ENCODE measurements at regions of chr5 and their contacts with region 1.

Region 1: DNA sequence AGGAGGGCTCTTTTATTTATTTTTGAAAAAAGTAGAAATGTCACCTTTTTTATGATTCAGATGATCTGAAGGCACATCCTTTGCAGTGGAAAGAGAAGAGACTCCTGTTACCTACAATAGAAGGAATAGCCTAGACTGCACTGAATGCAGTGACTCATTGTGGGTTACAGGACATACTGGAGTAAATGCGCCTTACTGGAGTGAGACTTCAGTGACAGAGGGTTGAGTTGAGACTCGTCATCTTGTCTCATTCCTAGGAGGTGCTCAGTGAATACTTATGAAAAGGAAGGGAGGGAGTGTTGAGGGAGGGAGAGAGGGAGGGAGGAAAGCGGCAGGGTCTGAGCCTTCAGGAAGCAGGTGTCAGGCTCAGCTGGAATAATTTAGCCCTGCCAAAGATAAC is 25.2 kb downstream of the ANKRA2 start:
- DNase-seq: no peak
- H3K4me3 ChIP-seq: no peak overlapping the region
- H3K4me3 Mint-ChIP-seq: no peak overlapping the region
- H3K27ac ChIP-seq: no peak overlapping the region
- H3K27ac Mint-ChIP-seq: no peak overlapping the region
- H3K4me1 ChIP-seq: no peaks in the 10 kb centered on the region
- H3K4me1 Mint-ChIP-seq: peaks cover 0 to 2% (median 0%) of the 10 kb centered on the region in 4 donors
- H3K27me3 ChIP-seq: no peaks in the 10 kb centered on the region
- H3K27me3 Mint-ChIP-seq: peaks cover 14 to 27% of the 10 kb centered on the region in 2 donors

Region 2: GRCh38 chr5:73088026-73088425 is 452.2 kb before region 1 on chr5:
- CTCF ChIA-PET with region 1: interaction called, 5 read pairs
- POLR2A ChIA-PET with region 1: no interaction called
- intact Hi-C with region 1: loop called (anchors 2 kb)
- DNase-seq: no peak
- H3K4me3 ChIP-seq: no peak overlapping the region
- H3K4me3 Mint-ChIP-seq: no peak overlapping the region
- H3K27ac ChIP-seq: no peak overlapping the region
- H3K27ac Mint-ChIP-seq: no peak overlapping the region
- H3K4me1 ChIP-seq: no peaks in the 10 kb centered on the region
- H3K4me1 Mint-ChIP-seq: no peaks in the 10 kb centered on the region
- H3K27me3 ChIP-seq: no peaks in the 10 kb centered on the region
- H3K27me3 Mint-ChIP-seq: peaks cover 0 to 1% of the 10 kb centered on the region in 2 donors

Region 3: DNA sequence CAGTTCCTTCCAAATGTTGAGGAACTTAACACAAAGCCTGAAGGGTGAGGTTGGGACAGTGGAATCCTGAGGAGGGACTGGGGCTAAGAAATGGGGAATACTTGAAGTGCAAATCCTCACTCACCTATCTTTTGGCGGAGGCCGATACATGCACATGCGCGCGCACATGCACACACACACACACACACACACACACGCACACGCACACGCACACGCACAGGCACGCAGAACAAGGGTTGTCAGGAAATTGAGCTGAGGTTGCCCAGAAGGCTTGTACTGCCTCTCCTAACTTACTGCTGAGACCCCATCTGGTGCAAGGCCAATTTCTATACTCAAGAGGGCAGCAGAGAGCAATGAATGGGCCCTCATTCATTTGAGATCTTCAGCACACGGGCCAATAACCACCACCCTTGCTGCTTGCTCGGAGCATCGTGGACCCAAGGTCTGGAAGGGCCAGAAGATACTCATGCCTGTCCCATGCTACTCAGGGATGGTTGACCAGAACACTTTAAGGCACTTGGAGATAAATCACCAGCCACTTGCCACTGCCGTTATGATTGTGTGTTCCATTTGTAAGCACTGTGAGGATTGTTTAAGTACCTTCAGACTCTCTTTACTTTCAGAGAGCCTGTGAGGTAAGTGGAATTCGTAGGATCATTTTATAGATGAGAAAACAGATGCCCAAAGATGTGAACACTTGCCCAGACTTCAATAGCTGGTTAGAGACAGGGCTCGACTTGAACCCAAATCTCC is 20.5 kb before region 1 on chr5:
- CTCF ChIA-PET with region 1: interaction called, 143 read pairs
- POLR2A ChIA-PET with region 1: no interaction called
- intact Hi-C with region 1: loop called (anchors 1 kb)
- DNase-seq: peak; percentile 75 to 80 (median 77)
- H3K4me3 ChIP-seq: no peak overlapping the region
- H3K4me3 Mint-ChIP-seq: peak overlapping the region in 7 of 8 donors; percentile 29 to 78 (median 52)
- H3K27ac ChIP-seq: no peak overlapping the region
- H3K27ac Mint-ChIP-seq: peak overlapping the region in 5 of 7 donors; percentile 24 to 91 (median 47)
- H3K4me1 ChIP-seq: peaks cover 8% of the 10 kb centered on the region
- H3K4me1 Mint-ChIP-seq: peaks cover 2 to 9% (median 7%) of the 10 kb centered on the region in 4 donors
- H3K27me3 ChIP-seq: no peaks in the 10 kb centered on the region
- H3K27me3 Mint-ChIP-seq: no peaks in the 10 kb centered on the region

Region 4: DNA sequence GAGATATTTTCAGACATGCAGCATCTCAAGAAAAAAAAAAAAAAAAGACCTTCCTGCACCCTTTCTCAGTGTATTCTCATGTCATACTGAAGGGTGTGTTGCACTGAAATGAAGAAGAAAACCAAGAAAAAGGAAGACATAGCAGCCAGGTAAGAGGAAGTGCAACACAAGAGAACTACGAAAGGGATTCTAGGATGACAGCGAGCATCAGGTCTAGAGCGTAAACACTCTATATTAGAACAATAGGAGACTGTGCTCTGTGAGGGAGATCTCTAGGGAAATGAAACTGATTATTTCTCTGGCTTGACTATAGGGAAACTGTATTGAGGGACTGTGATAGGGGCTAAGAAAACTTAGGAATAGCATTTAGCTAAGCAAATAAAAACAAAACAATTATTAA is 11.9 kb before region 1 on chr5:
- CTCF ChIA-PET with region 1: interaction called, 143 read pairs
- POLR2A ChIA-PET with region 1: no interaction called
- intact Hi-C with region 1: no loop called
- DNase-seq: no peak
- H3K4me3 ChIP-seq: no peak overlapping the region
- H3K4me3 Mint-ChIP-seq: no peak overlapping the region
- H3K27ac ChIP-seq: no peak overlapping the region
- H3K27ac Mint-ChIP-seq: no peak overlapping the region
- H3K4me1 ChIP-seq: no peaks in the 10 kb centered on the region
- H3K4me1 Mint-ChIP-seq: no peaks in the 10 kb centered on the region
- H3K27me3 ChIP-seq: no peaks in the 10 kb centered on the region
- H3K27me3 Mint-ChIP-seq: peaks cover 9 to 11% of the 10 kb centered on the region in 2 donors

Region 5: DNA sequence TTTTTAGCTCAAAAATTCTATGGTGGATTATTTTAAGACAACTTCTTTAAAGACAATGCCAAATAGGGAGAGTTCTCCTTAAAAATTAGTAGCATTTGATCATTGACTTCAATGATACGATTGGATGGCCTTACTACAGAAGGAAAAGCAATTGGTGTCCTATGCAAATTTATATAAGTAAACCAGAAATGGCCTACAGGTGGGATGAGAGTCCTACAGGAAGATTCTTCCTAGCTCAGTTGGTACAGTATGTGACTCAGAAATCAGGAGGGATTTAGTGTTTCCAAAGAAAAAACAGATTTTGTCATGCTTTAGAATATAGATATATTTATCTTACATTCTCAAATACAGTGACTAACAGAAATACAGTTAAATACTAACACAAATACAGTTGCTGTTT is 18.8 kb after region 1 on chr5:
- CTCF ChIA-PET with region 1: interaction called, 10 read pairs
- POLR2A ChIA-PET with region 1: no interaction called
- intact Hi-C with region 1: no loop called
- DNase-seq: no peak
- H3K4me3 ChIP-seq: no peak overlapping the region
- H3K4me3 Mint-ChIP-seq: no peak overlapping the region
- H3K27ac ChIP-seq: no peak overlapping the region
- H3K27ac Mint-ChIP-seq: no peak overlapping the region
- H3K4me1 ChIP-seq: peaks cover 7% of the 10 kb centered on the region
- H3K4me1 Mint-ChIP-seq: peaks cover 9 to 21% (median 13%) of the 10 kb centered on the region in 4 donors
- H3K27me3 ChIP-seq: no peaks in the 10 kb centered on the region
- H3K27me3 Mint-ChIP-seq: no peaks in the 10 kb centered on the region